ENCODE measurements at regions of chr3 and their contacts with region 1.

Region 1: DNA sequence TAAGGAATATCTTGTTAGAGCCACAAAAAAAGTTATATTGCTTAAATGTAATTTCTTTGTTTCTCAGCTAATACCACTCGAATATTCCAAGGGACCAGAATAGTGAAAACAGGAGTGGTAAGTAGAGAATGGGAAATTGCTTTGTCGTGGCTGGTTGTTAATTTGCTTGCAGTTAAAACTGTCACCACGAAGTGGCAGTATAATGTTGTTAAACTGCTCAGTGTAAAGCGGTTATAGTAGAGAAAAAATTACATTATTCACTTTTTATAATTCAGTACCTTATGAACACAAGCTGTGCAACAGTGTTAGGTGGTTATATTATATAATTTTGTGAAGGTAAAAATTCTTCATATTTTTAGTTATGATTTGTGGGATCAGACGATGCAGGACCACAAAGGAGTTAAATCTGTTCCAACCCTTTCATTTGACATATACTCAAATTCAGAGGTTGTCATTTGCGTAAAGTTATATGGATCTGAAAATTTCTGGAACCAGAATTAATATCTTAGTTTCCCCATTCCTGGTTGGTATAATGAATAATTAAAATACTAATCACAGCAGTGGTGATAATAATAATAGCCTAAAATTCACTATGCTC is 171.8 kb downstream of the FEZF2 start:
- DNase-seq: no peak
- H3K4me3 ChIP-seq: no peak overlapping the region
- H3K27ac ChIP-seq: no peak overlapping the region
- H3K27me3 ChIP-seq: no peaks in the 10 kb centered on the region
- CTCF ChIP-seq: peak; percentile 50 to 89 (median 72)

Region 2: DNA sequence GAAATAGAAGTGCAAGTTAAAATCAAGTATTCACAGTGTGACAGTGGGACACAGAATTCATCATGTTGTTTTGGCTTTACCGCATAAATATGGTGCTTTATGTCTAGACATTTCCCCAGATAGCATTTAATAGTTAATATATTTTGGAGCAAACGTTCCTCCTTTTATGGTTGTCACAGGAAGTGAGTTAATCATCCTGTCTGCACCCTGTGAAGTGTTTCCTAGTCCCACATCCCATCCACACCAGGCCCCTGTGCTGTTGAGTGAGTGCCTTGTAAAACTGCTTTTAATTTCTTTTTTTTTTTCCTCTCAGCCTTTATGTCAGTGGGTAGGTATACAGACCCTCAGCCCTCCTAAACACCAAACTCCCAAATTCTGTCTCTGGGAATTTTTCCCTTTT is 221.9 kb before region 1 on chr3:
- intact Hi-C with region 1: no loop called
- DNase-seq: no peak
- H3K4me3 ChIP-seq: no peak overlapping the region
- H3K27ac ChIP-seq: no peak overlapping the region
- H3K27me3 ChIP-seq: no peaks in the 10 kb centered on the region
- CTCF ChIP-seq: no peak

Region 3: DNA sequence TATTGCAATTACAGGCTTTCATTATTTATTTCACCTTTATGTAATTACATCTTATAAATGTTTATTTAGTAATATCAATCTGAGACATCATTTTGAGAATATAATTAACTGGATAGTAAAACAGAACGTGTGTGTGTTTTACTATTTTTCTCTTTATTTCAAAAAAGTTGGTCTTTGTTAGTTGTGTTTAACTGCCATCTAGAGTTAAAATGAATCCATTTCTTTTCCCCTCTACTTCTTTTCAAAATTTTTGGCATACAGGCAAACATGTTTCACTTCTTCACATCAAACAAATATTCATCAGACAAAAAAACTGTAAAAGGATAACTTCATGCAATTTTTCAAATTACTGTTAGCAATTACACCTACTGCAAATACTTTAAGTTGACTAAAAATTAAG is 110.7 kb after region 1 on chr3:
- intact Hi-C with region 1: loop called (anchors 2 to 5 kb)
- DNase-seq: no peak
- H3K4me3 ChIP-seq: no peak overlapping the region
- H3K27ac ChIP-seq: no peak overlapping the region
- H3K27me3 ChIP-seq: no peaks in the 10 kb centered on the region
- CTCF ChIP-seq: peak in 37 of 56 donors; percentile 5 to 60 (median 32)

Region 4: GRCh38 chr3:62318750-62319569 is 117.4 kb after region 1 on chr3:
- intact Hi-C with region 1: loop called in 1 of 2 experiments (anchors 5 kb)
- DNase-seq: peak; percentile 79 to 90 (median 85)
- H3K4me3 ChIP-seq: peak overlapping the region; percentile 51 to 86 (median 75)
- H3K27ac ChIP-seq: peak overlapping the region in 51 of 59 donors; percentile 10 to 88 (median 69)
- H3K27me3 ChIP-seq: no peaks in the 10 kb centered on the region
- CTCF ChIP-seq: peak in 17 of 56 donors; percentile 8 to 37 (median 21)

Region 5: GRCh38 chr3:62558549-62559112 is 357.1 kb after region 1 on chr3:
- intact Hi-C with region 1: loop called in 1 of 2 experiments (anchors 5 kb)
- DNase-seq: peak in 1 of 10 donors; percentile 25
- H3K4me3 ChIP-seq: no peak overlapping the region
- H3K27ac ChIP-seq: no peak overlapping the region
- H3K27me3 ChIP-seq: no peaks in the 10 kb centered on the region
- CTCF ChIP-seq: peak in 53 of 56 donors; percentile 10 to 70 (median 50)

Measured in dorsolateral prefrontal cortex (tissue), 120 donors.